ENCODE measurements at regions of chr16 and their contacts with region 1.

Region 1: DNA sequence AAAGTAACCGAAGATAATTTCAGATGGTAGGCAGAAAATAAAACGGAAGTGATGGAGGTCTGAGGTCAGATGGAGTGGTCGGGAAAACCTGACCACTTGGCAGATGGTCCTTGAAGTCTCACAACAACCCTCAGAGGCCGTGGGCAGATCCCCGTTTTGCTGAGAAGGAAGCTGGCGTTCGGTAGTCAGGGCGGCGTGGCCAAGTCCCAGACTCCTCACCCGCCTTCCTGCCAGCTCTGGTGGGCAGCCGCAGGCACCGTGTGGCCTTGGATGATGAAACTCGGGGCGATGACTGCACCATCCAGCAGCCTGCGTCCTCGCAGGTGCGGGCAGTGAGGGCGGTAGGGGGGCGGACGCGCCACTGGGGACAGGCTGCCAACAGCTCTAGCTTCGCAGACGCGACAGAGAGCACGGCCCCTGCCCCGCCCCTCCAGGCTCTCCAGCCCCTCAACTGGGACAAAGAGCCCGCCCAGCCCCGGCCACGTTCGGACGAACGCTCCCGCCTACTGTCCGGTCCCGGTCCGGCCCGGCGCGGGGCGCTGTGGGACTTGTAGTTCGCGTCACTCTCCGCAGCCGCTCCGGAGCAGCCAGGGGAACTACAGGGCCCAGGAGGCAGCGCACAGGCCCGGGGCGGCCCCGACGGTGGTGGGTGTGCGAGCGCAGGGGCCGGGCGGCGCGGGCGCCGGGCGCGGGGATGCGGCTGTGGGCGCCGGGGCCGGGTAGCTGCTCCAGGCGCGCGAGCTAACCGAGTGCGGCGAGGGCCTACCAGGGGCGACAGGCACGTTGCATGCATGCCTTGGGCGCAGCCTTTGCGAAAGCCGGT is at the start of gene GPT2:
- DNase-seq: peak; percentile 97
- ATAC-seq: peak; percentile 93
- H3K4me3 ChIP-seq: peak within 1 kb of the TSS; percentile 87 to 99 (median 99)
- H3K27ac ChIP-seq: peak within 1 kb of the TSS; percentile 95
- H3K4me1 ChIP-seq: peaks cover 82% of the 10 kb centered on the region
- H3K27me3 ChIP-seq: no peaks in the 10 kb centered on the region; a peak in 1 of 5 replicates
- CTCF ChIP-seq: peak; percentile 52
- EP300 ChIP-seq: peak; percentile 9 to 56; a peak in 2 of 4 replicates
- POLR2A ChIP-seq: peak; percentile 78 to 93
- RAD21 ChIP-seq: peak; percentile 44
- total RNA-seq, gene GPT2: 130 and 138 TPM in 2 replicates

Region 2: DNA sequence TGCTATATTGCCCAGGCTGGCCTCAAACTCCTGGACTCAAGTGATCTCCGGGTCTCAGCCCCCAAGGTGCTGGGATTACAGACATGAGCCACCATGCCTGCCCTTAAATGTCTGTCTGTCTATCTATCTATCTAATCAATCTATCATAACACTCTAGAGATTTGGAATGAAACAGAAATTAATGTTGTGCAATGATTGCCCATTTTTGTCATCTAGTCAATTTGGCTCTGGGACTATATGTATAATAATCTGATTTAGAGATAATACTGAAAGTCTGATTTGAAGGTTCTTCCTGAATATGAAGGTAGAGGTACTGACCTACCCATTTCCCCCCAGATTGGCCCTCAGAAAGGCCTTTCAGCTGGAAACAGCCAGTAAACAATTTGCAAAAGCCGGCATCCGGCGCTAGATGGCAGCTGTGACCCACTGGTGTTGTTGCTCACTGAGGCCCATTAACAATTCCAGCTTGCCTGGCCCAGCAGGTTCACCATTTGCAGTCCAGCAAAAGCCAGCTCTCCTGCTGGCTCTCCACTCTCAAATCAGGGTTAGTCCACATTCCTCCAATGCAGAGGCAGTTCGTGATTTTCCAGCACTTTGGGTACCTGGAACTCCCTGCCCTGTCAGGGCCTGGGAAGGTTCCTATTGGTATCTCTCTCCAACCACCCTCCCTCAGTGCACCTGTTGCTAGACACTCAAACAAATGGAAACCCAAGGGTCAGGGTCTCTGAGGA is 30.0 kb before region 1 on chr16:
- CTCF ChIA-PET with region 1: interaction called, 7 read pairs
- POLR2A ChIA-PET with region 1: interaction called, 306 read pairs
- in situ Hi-C with region 1: no loop called
- intact Hi-C with region 1: loop called (anchors 2 kb)
- DNase-seq: peak; percentile 81
- ATAC-seq: peak; percentile 86
- H3K4me3 ChIP-seq: no peak overlapping the region
- H3K27ac ChIP-seq: no peak overlapping the region
- H3K4me1 ChIP-seq: peaks cover 75% of the 10 kb centered on the region
- H3K27me3 ChIP-seq: no peaks in the 10 kb centered on the region
- CTCF ChIP-seq: peak; percentile 99
- EP300 ChIP-seq: no peak; a peak in 1 of 4 replicates
- POLR2A ChIP-seq: no peak
- RAD21 ChIP-seq: peak; percentile 99

Region 3: GRCh38 chr16:46859719-46860152 is 24.2 kb before region 1 on chr16:
- CTCF ChIA-PET with region 1: interaction called, 7 read pairs
- POLR2A ChIA-PET with region 1: interaction called, 306 read pairs
- in situ Hi-C with region 1: no loop called
- intact Hi-C with region 1: loop called (anchors 1 kb)
- DNase-seq: peak; percentile 82
- ATAC-seq: peak; percentile 51
- H3K4me3 ChIP-seq: no peak overlapping the region
- H3K27ac ChIP-seq: peak overlapping the region; percentile 17
- H3K4me1 ChIP-seq: peaks cover 91% of the 10 kb centered on the region
- H3K27me3 ChIP-seq: no peaks in the 10 kb centered on the region
- CTCF ChIP-seq: no peak
- EP300 ChIP-seq: no peak
- POLR2A ChIP-seq: no peak
- RAD21 ChIP-seq: no peak

Region 4: GRCh38 chr16:46871587-46871986 is 12.3 kb before region 1 on chr16:
- CTCF ChIA-PET with region 1: no interaction called
- POLR2A ChIA-PET with region 1: interaction called, 306 read pairs
- in situ Hi-C with region 1: no loop called
- intact Hi-C with region 1: loop called (anchors 1 kb)
- DNase-seq: no peak
- ATAC-seq: no peak
- H3K4me3 ChIP-seq: no peak overlapping the region
- H3K27ac ChIP-seq: no peak overlapping the region
- H3K4me1 ChIP-seq: peaks cover 100% of the 10 kb centered on the region
- H3K27me3 ChIP-seq: no peaks in the 10 kb centered on the region
- CTCF ChIP-seq: no peak
- EP300 ChIP-seq: no peak
- POLR2A ChIP-seq: no peak
- RAD21 ChIP-seq: no peak

Region 5: GRCh38 chr16:46896314-46896968 is 12.5 kb after region 1 on chr16:
- CTCF ChIA-PET with region 1: no interaction called
- POLR2A ChIA-PET with region 1: interaction called, 159 read pairs
- in situ Hi-C with region 1: no loop called
- intact Hi-C with region 1: loop called (anchors 2 kb)
- DNase-seq: no peak
- ATAC-seq: peak; percentile 7; the same call in 2 of the 3 replicates
- H3K4me3 ChIP-seq: peak overlapping the region in 1 of 3 experiments; percentile 15; a peak in 1 of 6 replicates
- H3K27ac ChIP-seq: peak overlapping the region; percentile 80
- H3K4me1 ChIP-seq: peaks cover 79% of the 10 kb centered on the region
- H3K27me3 ChIP-seq: no peaks in the 10 kb centered on the region
- CTCF ChIP-seq: no peak
- EP300 ChIP-seq: no peak
- POLR2A ChIP-seq: peak in 1 of 2 experiments; percentile 10; a peak in 1 of 4 replicates
- RAD21 ChIP-seq: no peak

Region 6: DNA sequence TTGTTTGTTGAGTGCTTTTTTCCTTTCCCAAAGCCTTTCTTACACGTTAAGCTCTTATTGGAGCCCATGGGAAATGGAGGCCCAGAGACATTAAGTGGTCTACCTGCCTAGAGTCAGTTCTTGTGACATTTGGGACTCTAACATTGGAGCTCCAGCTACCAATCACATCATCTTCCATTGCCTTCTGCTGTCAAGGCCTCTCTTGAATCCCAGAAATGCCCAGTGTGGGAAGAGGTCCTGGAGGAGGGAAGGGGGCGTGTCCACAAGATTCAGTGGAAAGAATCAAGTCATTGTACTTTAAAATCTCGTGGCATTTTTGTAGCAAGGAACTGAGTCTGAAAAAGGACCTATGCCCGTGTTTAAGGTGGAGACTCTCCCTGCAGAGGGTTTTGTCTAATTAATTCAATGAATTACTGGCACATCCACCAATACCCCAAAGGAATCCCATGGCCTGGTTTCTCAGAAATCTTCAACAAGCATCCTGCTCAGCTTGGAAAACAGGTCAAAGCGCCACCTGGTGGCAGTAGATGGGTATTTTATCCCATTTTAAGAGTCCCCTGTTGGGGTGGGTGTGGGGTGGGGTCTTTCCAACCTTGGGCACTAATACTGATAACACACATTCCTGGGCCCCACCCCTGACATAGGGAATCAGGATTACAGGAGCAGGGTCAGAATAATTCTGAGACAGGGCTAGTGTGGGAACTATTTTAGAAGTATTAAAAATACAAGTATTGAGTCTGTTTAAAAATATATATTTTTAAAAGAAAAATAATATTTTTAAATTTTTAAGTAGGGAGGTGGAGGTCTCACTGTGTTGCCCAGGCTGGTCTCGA is 24.9 kb after region 1 on chr16:
- CTCF ChIA-PET with region 1: no interaction called
- POLR2A ChIA-PET with region 1: interaction called, 133 read pairs
- in situ Hi-C with region 1: no loop called
- intact Hi-C with region 1: no loop called
- DNase-seq: peak; percentile 71
- ATAC-seq: peak; percentile 36
- H3K4me3 ChIP-seq: no peak overlapping the region
- H3K27ac ChIP-seq: no peak overlapping the region
- H3K4me1 ChIP-seq: peaks cover 28% of the 10 kb centered on the region
- H3K27me3 ChIP-seq: no peaks in the 10 kb centered on the region
- CTCF ChIP-seq: peak; percentile 71
- EP300 ChIP-seq: no peak
- POLR2A ChIP-seq: no peak
- RAD21 ChIP-seq: peak; percentile 65

Region 7: DNA sequence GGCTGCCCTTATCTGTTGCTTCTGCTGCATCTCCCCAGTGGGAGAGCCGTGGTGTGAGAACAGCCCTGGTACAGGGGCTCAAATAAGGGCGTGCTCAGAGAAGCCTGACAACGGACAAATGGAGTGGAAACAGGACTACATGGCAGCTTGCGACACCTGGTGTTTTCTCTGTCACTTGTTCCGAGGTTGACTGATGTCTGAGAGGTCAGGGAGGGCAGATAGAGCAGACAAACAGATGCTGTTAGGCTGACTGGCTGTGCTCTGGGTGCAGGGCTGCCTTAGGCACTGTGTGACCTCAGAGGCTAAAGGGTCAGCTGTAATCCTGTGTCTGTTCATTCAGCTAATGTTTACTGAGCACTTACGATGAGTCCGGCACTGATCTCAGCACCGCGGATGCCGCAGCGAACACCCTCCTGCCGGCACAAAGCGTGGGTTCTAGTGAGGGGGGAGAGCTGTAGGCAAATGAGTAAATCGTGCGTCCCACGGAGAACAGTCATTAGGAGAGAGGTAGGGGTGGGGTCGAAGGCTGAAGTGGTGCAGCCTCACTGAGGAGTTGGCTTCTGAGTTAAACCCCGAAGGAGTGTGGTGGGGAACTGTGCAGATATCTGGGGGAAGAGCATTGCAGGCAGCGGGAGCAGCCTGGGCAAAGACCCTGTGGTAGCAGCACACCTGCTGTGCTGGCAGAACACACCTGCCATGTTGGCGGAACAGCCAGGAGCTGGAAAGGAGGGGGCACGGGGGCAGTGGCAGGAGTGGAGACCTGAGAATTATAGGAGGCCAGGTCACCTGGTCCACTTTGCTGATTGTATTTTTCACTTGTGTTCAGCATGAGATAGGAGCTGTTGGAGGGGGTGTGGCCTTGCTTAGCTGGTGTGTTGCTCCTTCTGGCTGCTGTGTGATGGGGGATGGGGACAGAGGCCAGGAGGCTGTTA is 35.2 kb after region 1 on chr16:
- CTCF ChIA-PET with region 1: no interaction called
- POLR2A ChIA-PET with region 1: interaction called, 17 read pairs
- in situ Hi-C with region 1: no loop called
- intact Hi-C with region 1: no loop called
- DNase-seq: peak; percentile 97
- ATAC-seq: peak; percentile 88
- H3K4me3 ChIP-seq: no peak overlapping the region
- H3K27ac ChIP-seq: peak overlapping the region; percentile 43
- H3K4me1 ChIP-seq: peaks cover 56% of the 10 kb centered on the region
- H3K27me3 ChIP-seq: no peaks in the 10 kb centered on the region
- CTCF ChIP-seq: peak; percentile 96
- EP300 ChIP-seq: peak; percentile 64 to 67; a peak in 2 of 4 replicates
- POLR2A ChIP-seq: peak in 1 of 2 experiments; percentile 16; a peak in 2 of 4 replicates
- RAD21 ChIP-seq: peak; percentile 72; the same call in 1 of the 2 replicates